ENCODE measurements at regions of chr15 and their contacts with region 1.

Region 1: GRCh38 chr15:92797168-92797951 is 102.8 kb upstream of the CHD2 start:
- DNase-seq: peak; percentile 40
- ATAC-seq: peak; percentile 93
- H3K4me3 ChIP-seq: no peak overlapping the region
- H3K27ac ChIP-seq: no peak overlapping the region
- H3K4me1 ChIP-seq: no peaks in the 10 kb centered on the region
- H3K27me3 ChIP-seq: no peaks in the 10 kb centered on the region; a peak in 1 of 4 replicates
- CTCF ChIP-seq: peak; percentile 51 to 69 (median 65); a peak in 5 of 6 replicates
- EP300 ChIP-seq: no peak
- POLR2A ChIP-seq: no peak
- RAD21 ChIP-seq: peak; percentile 64

Region 2: GRCh38 chr15:92561754-92562153 is 235.6 kb before region 1 on chr15:
- CTCF ChIA-PET with region 1: no interaction called
- POLR2A ChIA-PET with region 1: no interaction called
- RAD21 ChIA-PET with region 1: no interaction called
- SMC1A ChIA-PET with region 1: no interaction called
- in situ Hi-C with region 1: no loop called
- intact Hi-C with region 1: no loop called
- DNase-seq: no peak
- ATAC-seq: no peak
- H3K4me3 ChIP-seq: no peak overlapping the region
- H3K27ac ChIP-seq: no peak overlapping the region
- H3K4me1 ChIP-seq: no peaks in the 10 kb centered on the region
- H3K27me3 ChIP-seq: no peaks in the 10 kb centered on the region
- CTCF ChIP-seq: no peak
- EP300 ChIP-seq: no peak
- POLR2A ChIP-seq: no peak
- RAD21 ChIP-seq: no peak

Region 3: DNA sequence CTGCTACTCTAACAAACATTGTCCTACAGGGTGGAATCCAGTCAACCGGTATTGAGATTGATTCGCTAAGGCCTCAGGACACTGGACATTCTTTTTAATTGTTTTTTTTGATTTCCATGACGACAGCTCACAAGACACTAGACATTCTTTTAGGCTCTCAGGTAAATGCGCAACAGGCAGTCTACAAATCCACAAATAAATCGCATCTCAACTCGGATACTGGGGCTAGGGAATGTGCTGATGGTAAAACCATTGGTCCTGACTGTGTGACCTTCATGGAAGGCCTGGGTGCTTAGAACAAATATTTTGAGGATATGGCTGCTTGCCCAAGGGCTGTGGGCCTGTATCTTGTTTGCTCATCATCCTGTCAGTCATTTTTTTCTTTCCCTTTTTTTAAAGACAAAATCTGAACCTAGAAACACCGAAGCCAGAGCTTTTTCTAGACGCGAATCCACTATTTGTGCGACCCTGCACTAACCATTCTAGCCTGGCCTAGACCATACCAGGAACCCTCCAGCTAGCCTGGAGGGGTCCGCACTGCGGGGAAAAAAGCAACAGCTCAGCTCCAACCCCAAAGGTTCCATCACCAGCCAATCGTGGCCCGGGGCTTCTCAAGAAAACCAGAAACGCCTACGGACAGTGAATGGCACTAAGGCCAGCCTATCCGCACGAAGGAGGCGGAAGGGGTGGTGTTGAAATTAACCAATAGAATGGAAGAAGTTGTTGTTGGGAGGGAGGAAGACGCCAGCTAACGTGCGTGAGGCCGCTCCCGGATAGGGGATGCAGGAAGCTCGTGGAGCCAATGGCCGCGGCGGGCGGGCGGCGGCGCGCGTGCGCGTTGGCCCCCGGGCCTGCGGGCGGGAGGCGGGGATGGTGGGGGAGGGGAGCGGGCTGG is 84.7 kb after region 1 on chr15:
- CTCF ChIA-PET with region 1: interaction called, 4 read pairs
- POLR2A ChIA-PET with region 1: interaction called, 3 read pairs
- RAD21 ChIA-PET with region 1: interaction called, 7 read pairs
- SMC1A ChIA-PET with region 1: interaction called, 11 read pairs
- in situ Hi-C with region 1: no loop called
- intact Hi-C with region 1: no loop called
- DNase-seq: peak; percentile 100
- ATAC-seq: peak; percentile 90
- H3K4me3 ChIP-seq: peak overlapping the region; percentile 62
- H3K27ac ChIP-seq: peak overlapping the region; percentile 96
- H3K4me1 ChIP-seq: peaks cover 5% of the 10 kb centered on the region; the same call in 1 of the 2 replicates
- H3K27me3 ChIP-seq: no peaks in the 10 kb centered on the region
- CTCF ChIP-seq: no peak
- EP300 ChIP-seq: no peak
- POLR2A ChIP-seq: peak; percentile 77
- RAD21 ChIP-seq: no peak

Region 4: DNA sequence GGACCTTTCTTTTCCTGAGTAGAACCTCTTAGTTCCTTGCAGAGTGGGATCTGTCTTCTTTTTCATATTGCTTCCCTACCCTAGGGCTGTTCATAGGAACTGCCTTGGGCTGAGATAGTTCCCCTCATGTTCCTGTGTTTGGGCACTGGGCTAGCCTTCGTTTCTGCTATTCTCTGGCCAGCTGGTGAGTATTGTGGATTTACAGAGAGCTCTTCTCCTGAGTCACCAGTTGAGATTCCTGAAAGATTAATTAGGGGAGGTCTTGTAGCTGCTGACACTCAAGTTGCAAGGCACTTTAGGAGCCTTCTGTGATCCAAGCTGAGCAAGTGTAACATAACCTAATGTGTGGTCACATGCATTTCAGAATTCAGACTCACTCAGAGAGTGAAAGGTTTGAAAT is 133.4 kb after region 1 on chr15:
- CTCF ChIA-PET with region 1: interaction called, 29 read pairs
- POLR2A ChIA-PET with region 1: no interaction called
- RAD21 ChIA-PET with region 1: interaction called, 5 read pairs
- SMC1A ChIA-PET with region 1: interaction called, 34 read pairs
- in situ Hi-C with region 1: no loop called
- intact Hi-C with region 1: no loop called
- DNase-seq: no peak
- ATAC-seq: no peak; the same call in 2 of the 3 replicates
- H3K4me3 ChIP-seq: no peak overlapping the region
- H3K27ac ChIP-seq: no peak overlapping the region
- H3K4me1 ChIP-seq: peaks cover 8% of the 10 kb centered on the region; the same call in 1 of the 2 replicates
- H3K27me3 ChIP-seq: no peaks in the 10 kb centered on the region
- CTCF ChIP-seq: no peak
- EP300 ChIP-seq: no peak
- POLR2A ChIP-seq: no peak
- RAD21 ChIP-seq: no peak

Region 5: GRCh38 chr15:92954578-92954977 is 157.2 kb after region 1 on chr15:
- CTCF ChIA-PET with region 1: interaction called, 10 read pairs
- POLR2A ChIA-PET with region 1: no interaction called
- RAD21 ChIA-PET with region 1: no interaction called
- SMC1A ChIA-PET with region 1: interaction called, 5 read pairs
- in situ Hi-C with region 1: no loop called
- intact Hi-C with region 1: no loop called
- DNase-seq: no peak
- ATAC-seq: peak; percentile 50; the same call in 1 of the 3 replicates
- H3K4me3 ChIP-seq: no peak overlapping the region
- H3K27ac ChIP-seq: no peak overlapping the region
- H3K4me1 ChIP-seq: no peaks in the 10 kb centered on the region
- H3K27me3 ChIP-seq: no peaks in the 10 kb centered on the region
- CTCF ChIP-seq: peak; percentile 11 to 40 (median 33); a peak in 4 of 6 replicates
- EP300 ChIP-seq: no peak
- POLR2A ChIP-seq: no peak
- RAD21 ChIP-seq: no peak

Region 6: DNA sequence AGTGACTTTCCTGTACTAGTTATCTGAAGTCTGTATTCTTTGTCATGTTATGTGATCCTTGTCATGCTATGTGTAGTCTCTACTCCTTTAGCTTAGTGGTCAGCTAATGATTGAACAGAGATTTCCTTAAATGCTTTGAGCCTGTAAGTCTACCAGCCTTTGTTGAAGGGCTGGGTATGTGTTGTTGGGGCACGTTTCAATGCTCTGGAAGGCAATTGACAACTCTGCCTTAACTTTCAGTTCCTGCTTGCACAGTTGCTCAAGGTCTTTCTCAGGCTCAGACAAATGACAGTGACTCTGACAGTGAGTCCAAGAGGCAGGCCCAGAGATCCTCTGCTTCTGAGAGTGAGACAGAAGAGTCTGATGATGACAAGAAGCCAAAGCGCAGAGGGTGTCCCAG is 192.1 kb after region 1 on chr15:
- CTCF ChIA-PET with region 1: interaction called, 6 read pairs
- POLR2A ChIA-PET with region 1: no interaction called
- RAD21 ChIA-PET with region 1: interaction called, 3 read pairs
- SMC1A ChIA-PET with region 1: no interaction called
- in situ Hi-C with region 1: loop called (anchors 10 kb)
- intact Hi-C with region 1: no loop called
- DNase-seq: peak; percentile 38
- ATAC-seq: peak; percentile 47
- H3K4me3 ChIP-seq: no peak overlapping the region
- H3K27ac ChIP-seq: no peak overlapping the region
- H3K4me1 ChIP-seq: no peaks in the 10 kb centered on the region
- H3K27me3 ChIP-seq: no peaks in the 10 kb centered on the region
- CTCF ChIP-seq: no peak
- EP300 ChIP-seq: no peak
- POLR2A ChIP-seq: no peak
- RAD21 ChIP-seq: no peak

Region 7: GRCh38 chr15:94119923-94120775 is 1322.8 kb after region 1 on chr15:
- CTCF ChIA-PET with region 1: interaction called, 3 read pairs
- POLR2A ChIA-PET with region 1: no interaction called
- RAD21 ChIA-PET with region 1: no interaction called
- SMC1A ChIA-PET with region 1: no interaction called
- in situ Hi-C with region 1: loop called (anchors 25 kb)
- intact Hi-C with region 1: no loop called
- DNase-seq: peak; percentile 49
- ATAC-seq: peak; percentile 100
- H3K4me3 ChIP-seq: no peak overlapping the region
- H3K27ac ChIP-seq: no peak overlapping the region
- H3K4me1 ChIP-seq: no peaks in the 10 kb centered on the region
- H3K27me3 ChIP-seq: no peaks in the 10 kb centered on the region
- CTCF ChIP-seq: peak; percentile 85 to 100 (median 94); a peak in 5 of 6 replicates
- EP300 ChIP-seq: no peak
- POLR2A ChIP-seq: no peak
- RAD21 ChIP-seq: peak; percentile 97